ENCODE measurements at regions of chr6 and their contacts with region 1.

Region 1: GRCh38 chr6:75349262-75349984 is 64.8 kb upstream of the TMEM30A start:
- DNase-seq: peak; percentile 23 to 46
- ATAC-seq: peak; percentile 29 to 74 (median 68)
- H3K4me3 ChIP-seq: peak overlapping the region in 9 of 10 donors; percentile 1 to 53 (median 37)
- H3K27ac ChIP-seq: peak overlapping the region in 8 of 10 donors; percentile 5 to 63 (median 50)
- H3K4me1 ChIP-seq: peaks cover 4 to 50% (median 20%) of the 10 kb centered on the region in 9 donors
- H3K27me3 ChIP-seq: peaks cover 0 to 16% (median 0%) of the 10 kb centered on the region in 7 donors
- CTCF ChIP-seq: peak in 5 of 9 donors; percentile 8 to 38 (median 23)

Region 2: DNA sequence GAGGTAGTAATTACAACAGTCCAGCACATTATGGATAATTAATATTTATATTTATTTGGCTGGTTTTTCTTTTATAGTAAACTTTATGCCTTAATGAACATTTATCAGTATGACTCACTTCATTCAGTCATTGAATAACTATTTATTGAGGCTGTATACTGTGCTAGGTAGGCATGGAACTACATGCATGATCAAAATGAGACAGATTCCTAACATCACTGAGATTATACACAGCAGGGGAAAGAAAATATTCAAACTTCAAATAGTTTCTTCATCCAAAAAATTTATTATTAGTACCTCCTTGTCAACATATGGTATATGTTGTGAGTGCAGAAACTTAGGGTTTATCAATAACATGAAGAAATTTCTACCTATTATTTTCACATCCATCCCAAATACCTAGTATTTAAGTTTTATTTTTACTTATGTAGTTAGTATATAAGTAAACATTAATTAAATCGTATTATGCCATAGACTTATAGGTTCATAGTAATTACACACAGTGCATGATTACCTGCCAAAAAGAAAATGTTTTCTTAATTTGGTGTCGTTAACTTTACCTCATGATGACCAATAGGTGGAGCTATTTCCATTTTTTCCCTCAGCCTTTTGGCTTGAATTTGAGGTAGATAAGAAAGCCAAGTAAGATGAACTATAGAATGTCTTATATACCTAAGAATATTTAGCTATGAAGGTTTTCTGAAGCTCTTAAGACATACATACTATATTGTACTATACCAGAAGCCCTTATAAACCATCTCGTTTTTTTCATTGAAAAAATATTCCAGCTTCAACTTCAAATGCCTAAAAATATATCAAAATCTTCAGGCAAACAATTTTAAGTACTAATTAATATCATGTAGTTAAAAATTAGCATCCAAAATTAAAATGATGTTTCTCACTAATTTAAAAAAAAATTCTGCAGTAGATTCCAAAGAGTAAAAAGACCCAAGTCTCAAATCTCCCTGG is 52.3 kb before region 1 on chr6:
- intact Hi-C with region 1: loop called in 2 of 10 experiments (anchors 5 kb)
- DNase-seq: no peak
- ATAC-seq: peak in 7 of 8 donors; percentile 20 to 59 (median 39)
- H3K4me3 ChIP-seq: no peak overlapping the region
- H3K27ac ChIP-seq: no peak overlapping the region
- H3K4me1 ChIP-seq: peaks cover 0 to 32% (median 24%) of the 10 kb centered on the region in 9 donors
- H3K27me3 ChIP-seq: no peaks in the 10 kb centered on the region
- CTCF ChIP-seq: peak; percentile 60 to 86 (median 76)

Region 3: DNA sequence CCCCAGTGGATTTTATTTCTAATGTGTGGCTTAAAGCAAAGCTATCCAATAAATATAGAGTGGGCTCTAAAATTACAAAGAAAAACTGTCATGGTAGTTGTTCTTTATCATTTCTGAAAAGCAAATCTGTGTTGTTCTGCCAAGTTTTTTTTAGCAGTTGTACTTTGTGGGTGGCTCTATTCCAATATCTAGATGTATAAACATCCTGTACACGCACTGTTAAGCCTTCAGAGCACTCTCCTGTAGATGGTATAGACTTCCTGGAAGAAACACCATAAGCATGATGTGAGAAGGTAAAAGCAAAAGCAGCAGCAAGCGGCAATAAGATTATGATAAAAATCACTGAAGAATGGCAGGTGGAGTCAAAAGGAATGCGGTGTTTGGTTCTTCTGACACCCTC is 43.4 kb before region 1 on chr6:
- intact Hi-C with region 1: loop called in 2 of 10 experiments (anchors 5 kb)
- DNase-seq: no peak
- ATAC-seq: peak in 2 of 8 donors; percentile 48 to 56
- H3K4me3 ChIP-seq: no peak overlapping the region
- H3K27ac ChIP-seq: no peak overlapping the region
- H3K4me1 ChIP-seq: peaks cover 0 to 16% (median 8%) of the 10 kb centered on the region in 9 donors
- H3K27me3 ChIP-seq: peaks cover 0 to 7% (median 0%) of the 10 kb centered on the region in 7 donors
- CTCF ChIP-seq: no peak

Region 4: GRCh38 chr6:75986935-75987334 is 637.5 kb after region 1 on chr6:
- intact Hi-C with region 1: no loop called
- DNase-seq: no peak
- ATAC-seq: no peak
- H3K4me3 ChIP-seq: no peak overlapping the region
- H3K27ac ChIP-seq: no peak overlapping the region
- H3K4me1 ChIP-seq: no peaks in the 10 kb centered on the region
- H3K27me3 ChIP-seq: no peaks in the 10 kb centered on the region
- CTCF ChIP-seq: no peak